Right cardiac atrium (tissue), 5 donors: ENCODE measurements at regions of chr1 and their contacts with region 1.

Region 1: GRCh38 chr1:223087291-223088255 is 55.5 kb downstream of the TLR5 start:
- DNase-seq: no peak
- ATAC-seq: no peak
- H3K4me3 ChIP-seq: no peak overlapping the region
- H3K27ac ChIP-seq: no peak overlapping the region
- H3K4me1 ChIP-seq: no peaks in the 10 kb centered on the region
- H3K27me3 ChIP-seq: no peaks in the 10 kb centered on the region

Region 2: DNA sequence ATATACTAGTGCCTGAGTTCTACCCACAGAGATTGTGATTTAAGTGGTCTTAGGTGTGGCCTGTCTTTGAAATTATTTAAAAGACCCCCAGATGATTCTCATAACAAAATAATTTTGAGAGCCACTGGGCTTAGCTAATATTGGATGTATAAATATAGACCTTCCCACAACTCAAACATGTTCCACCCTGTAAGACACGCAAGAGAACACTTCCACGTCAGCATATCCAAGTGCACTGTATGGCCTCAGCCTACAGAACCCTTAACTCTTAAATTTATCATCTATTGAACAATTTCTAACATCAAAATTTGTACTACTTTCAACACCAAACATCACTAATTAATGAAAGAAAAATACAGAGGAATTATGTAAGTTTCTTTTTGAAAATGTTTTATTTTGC is 348.1 kb before region 1 on chr1:
- intact Hi-C with region 1: loop called in 3 of 4 experiments (anchors 5 to 10 kb)
- DNase-seq: no peak
- ATAC-seq: no peak
- H3K4me3 ChIP-seq: no peak overlapping the region
- H3K27ac ChIP-seq: no peak overlapping the region
- H3K4me1 ChIP-seq: no peaks in the 10 kb centered on the region
- H3K27me3 ChIP-seq: no peaks in the 10 kb centered on the region

Region 3: GRCh38 chr1:222754366-222755139 is 333.0 kb before region 1 on chr1:
- intact Hi-C with region 1: loop called in 1 of 4 experiments (anchors 10 kb)
- DNase-seq: peak; percentile 68 to 83 (median 72)
- ATAC-seq: peak; percentile 80 to 87
- H3K4me3 ChIP-seq: no peak overlapping the region
- H3K27ac ChIP-seq: no peak overlapping the region
- H3K4me1 ChIP-seq: no peaks in the 10 kb centered on the region
- H3K27me3 ChIP-seq: no peaks in the 10 kb centered on the region

Region 4: GRCh38 chr1:222786121-222786520 is 301.5 kb before region 1 on chr1:
- intact Hi-C with region 1: loop called (anchors 5 kb)
- DNase-seq: no peak
- ATAC-seq: no peak
- H3K4me3 ChIP-seq: no peak overlapping the region
- H3K27ac ChIP-seq: no peak overlapping the region
- H3K4me1 ChIP-seq: no peaks in the 10 kb centered on the region
- H3K27me3 ChIP-seq: no peaks in the 10 kb centered on the region

Region 5: GRCh38 chr1:223022641-223023473 is 64.7 kb before region 1 on chr1:
- intact Hi-C with region 1: no loop called
- DNase-seq: peak in 1 of 3 donors; percentile 40
- ATAC-seq: peak; percentile 70 to 94
- H3K4me3 ChIP-seq: no peak overlapping the region
- H3K27ac ChIP-seq: peak overlapping the region; percentile 13
- H3K4me1 ChIP-seq: peaks cover 3% of the 10 kb centered on the region
- H3K27me3 ChIP-seq: no peaks in the 10 kb centered on the region

Region 6: GRCh38 chr1:223123011-223123610 is 35.5 kb after region 1 on chr1:
- intact Hi-C with region 1: loop called in 1 of 4 experiments (anchors 5 kb)
- DNase-seq: no peak
- ATAC-seq: peak in 1 of 2 donors; percentile 30
- H3K4me3 ChIP-seq: no peak overlapping the region
- H3K27ac ChIP-seq: no peak overlapping the region
- H3K4me1 ChIP-seq: no peaks in the 10 kb centered on the region
- H3K27me3 ChIP-seq: no peaks in the 10 kb centered on the region